ENCODE measurements at regions of chr11 and their contacts with region 1.

Region 1: DNA sequence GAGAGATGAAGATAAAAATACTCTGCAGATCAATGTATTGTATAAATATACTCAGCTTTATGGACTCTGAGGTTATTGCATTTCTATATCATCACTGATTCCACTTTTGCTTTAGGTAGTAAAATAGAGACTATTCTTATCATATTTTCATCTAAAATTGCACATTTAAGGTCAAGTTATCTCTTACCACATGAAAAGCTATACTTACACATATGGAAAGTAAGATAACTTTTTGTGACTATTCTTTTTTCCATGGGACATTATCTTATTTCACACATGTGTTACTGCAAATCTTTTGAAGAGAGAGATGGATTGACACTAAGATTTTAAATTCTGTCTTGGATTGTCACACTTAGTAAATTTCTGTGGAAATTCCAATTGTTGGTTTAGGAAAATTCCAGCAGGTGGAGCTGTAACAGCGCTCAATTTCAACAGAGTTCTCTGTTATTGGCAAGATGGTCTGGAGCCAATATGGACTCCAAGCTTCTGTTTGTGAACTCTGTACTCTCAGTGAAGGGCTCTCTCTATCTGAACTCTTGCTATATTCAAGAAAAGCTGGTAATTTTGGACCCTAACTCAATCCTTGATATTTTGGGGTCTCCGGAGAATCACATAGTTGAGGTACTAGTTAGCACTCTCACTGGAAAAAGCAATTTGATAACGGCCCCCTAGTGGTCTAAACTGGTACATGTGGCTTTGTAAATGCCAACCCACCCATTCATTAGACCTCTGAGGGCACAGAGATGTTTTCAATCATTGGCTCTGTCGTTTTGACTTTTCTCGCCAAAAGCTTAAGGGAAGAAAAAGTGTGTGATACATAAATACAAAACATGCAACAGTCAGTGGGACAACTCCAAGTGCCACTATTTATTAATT is 429.7 kb downstream of the ETS1 start:
- DNase-seq: peak in 1 of 2 experiments; percentile 76
- H3K4me3 ChIP-seq: peak overlapping the region in 2 of 4 experiments; percentile 19 to 45; a peak in 4 of 8 replicates
- H3K27ac ChIP-seq: no peak overlapping the region
- H3K4me1 ChIP-seq: no peaks in the 10 kb centered on the region
- H3K27me3 ChIP-seq: no peaks in the 10 kb centered on the region
- CTCF ChIP-seq: peak in 2 of 3 experiments; percentile 67 to 68; a peak in 3 of 4 replicates
- EP300 ChIP-seq: no peak
- POLR2A ChIP-seq: no peak
- RAD21 ChIP-seq: peak; percentile 70 to 71

Region 2: DNA sequence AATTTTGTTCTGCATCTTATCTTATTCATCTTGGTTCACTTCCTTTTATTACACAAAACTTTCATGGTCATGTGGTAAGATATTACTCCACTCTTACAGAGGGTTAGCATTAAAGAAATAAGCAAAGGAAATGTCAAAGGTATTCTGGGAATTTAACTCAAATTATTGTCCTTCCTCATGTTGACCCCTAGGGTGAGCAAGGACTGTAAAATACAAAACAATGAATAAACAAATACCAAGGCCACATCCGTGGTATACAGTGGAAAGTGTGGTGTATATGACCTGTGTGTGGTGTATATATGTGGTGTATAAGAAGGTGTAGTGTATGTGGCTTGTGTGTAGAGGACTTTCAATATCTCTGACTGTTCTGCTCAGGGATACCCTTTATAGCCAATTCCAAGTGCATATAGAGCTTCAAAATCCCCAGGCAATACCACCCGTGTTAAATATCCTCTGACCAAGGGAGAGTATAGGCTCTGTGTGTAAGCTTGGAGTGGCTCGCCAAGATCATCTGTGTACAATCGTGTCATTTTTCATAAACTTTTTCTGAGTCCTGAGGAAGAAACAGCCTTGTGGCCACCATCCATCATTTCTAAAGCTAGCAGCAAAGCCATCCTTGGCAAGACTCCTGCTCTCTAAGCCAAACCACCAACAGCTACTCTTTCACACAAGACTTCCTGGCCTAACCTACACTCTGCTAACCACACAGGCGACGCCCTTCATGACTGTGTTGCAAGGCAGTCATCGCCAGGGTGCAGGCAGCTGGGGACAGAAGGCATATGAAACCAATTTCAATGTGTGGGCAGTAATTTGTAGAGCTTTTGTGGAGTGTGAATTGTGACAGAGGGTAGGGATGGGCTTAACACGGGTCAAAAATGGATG is 118.3 kb before region 1 on chr11:
- CTCF ChIA-PET with region 1: interaction called, 14 read pairs
- POLR2A ChIA-PET with region 1: no interaction called
- DNase-seq: no peak
- H3K4me3 ChIP-seq: no peak overlapping the region
- H3K27ac ChIP-seq: no peak overlapping the region
- H3K4me1 ChIP-seq: no peaks in the 10 kb centered on the region; a peak in 1 of 7 replicates
- H3K27me3 ChIP-seq: no peaks in the 10 kb centered on the region
- CTCF ChIP-seq: no peak
- EP300 ChIP-seq: no peak
- POLR2A ChIP-seq: no peak
- RAD21 ChIP-seq: no peak

Region 3: GRCh38 chr11:128116885-128117284 is 40.8 kb before region 1 on chr11:
- CTCF ChIA-PET with region 1: interaction called, 11 read pairs
- POLR2A ChIA-PET with region 1: no interaction called
- DNase-seq: no peak
- H3K4me3 ChIP-seq: no peak overlapping the region
- H3K27ac ChIP-seq: no peak overlapping the region
- H3K4me1 ChIP-seq: no peaks in the 10 kb centered on the region
- H3K27me3 ChIP-seq: no peaks in the 10 kb centered on the region
- CTCF ChIP-seq: no peak
- EP300 ChIP-seq: no peak
- POLR2A ChIP-seq: no peak
- RAD21 ChIP-seq: no peak

Region 4: DNA sequence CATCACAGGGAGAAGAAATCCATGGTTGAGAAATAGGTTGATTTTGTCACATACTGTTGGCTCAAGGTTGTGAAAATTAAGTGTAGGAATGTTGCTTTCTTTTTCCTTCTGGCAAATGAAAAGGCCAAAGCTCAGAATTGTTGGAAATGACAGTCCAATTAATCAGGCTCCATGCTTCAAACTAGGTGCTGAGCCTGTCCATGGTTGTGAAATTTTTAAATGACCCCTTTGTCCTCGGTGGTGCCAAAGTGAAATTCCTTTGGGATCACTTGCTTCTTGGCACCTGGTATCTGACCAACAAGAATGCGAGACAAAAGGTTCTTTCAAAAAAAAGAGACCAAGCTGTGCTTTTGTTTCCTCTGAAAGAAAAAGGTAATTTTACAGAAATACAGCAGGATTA is 22.2 kb before region 1 on chr11:
- CTCF ChIA-PET with region 1: interaction called, 20 read pairs
- POLR2A ChIA-PET with region 1: no interaction called
- DNase-seq: no peak
- H3K4me3 ChIP-seq: peak overlapping the region in 1 of 4 experiments; percentile 17; a peak in 1 of 8 replicates
- H3K27ac ChIP-seq: 0 out of 2 replicates have a peak overlapping the region, but pooled peaks have one; percentile 28
- H3K4me1 ChIP-seq: 0 out of 7 replicates have a peak, but pooled peaks cover 0 to 3% (median 1%) of the 10 kb centered on the region in 4 experiments
- H3K27me3 ChIP-seq: no peaks in the 10 kb centered on the region
- CTCF ChIP-seq: no peak
- EP300 ChIP-seq: 0 out of 3 replicates have a peak, but pooled peaks of 1 of the 2 experiments have one; percentile 32
- POLR2A ChIP-seq: no peak
- RAD21 ChIP-seq: no peak

Region 5: GRCh38 chr11:128172046-128172878 is 14.6 kb after region 1 on chr11:
- CTCF ChIA-PET with region 1: interaction called, 112 read pairs
- POLR2A ChIA-PET with region 1: interaction called, 3 read pairs
- DNase-seq: peak in 1 of 2 experiments; percentile 85
- H3K4me3 ChIP-seq: no peak overlapping the region
- H3K27ac ChIP-seq: no peak overlapping the region
- H3K4me1 ChIP-seq: peaks cover 2 to 6% (median 3%) of the 10 kb centered on the region in 4 experiments; a peak in 6 of 7 replicates
- H3K27me3 ChIP-seq: no peaks in the 10 kb centered on the region; a peak in 1 of 7 replicates
- CTCF ChIP-seq: peak; percentile 53 to 82 (median 70)
- EP300 ChIP-seq: no peak
- POLR2A ChIP-seq: no peak
- RAD21 ChIP-seq: peak; percentile 90 to 93

Region 6: GRCh38 chr11:128208329-128209137 is 50.9 kb after region 1 on chr11:
- CTCF ChIA-PET with region 1: no interaction called
- POLR2A ChIA-PET with region 1: no interaction called
- DNase-seq: no peak
- H3K4me3 ChIP-seq: no peak overlapping the region
- H3K27ac ChIP-seq: no peak overlapping the region
- H3K4me1 ChIP-seq: no peaks in the 10 kb centered on the region
- H3K27me3 ChIP-seq: no peaks in the 10 kb centered on the region
- CTCF ChIP-seq: no peak
- EP300 ChIP-seq: no peak
- POLR2A ChIP-seq: no peak
- RAD21 ChIP-seq: no peak

Region 7: GRCh38 chr11:128290106-128290840 is 132.6 kb after region 1 on chr11:
- CTCF ChIA-PET with region 1: interaction called, 17 read pairs
- POLR2A ChIA-PET with region 1: no interaction called
- DNase-seq: peak in 1 of 2 experiments; percentile 60
- H3K4me3 ChIP-seq: no peak overlapping the region
- H3K27ac ChIP-seq: no peak overlapping the region
- H3K4me1 ChIP-seq: no peaks in the 10 kb centered on the region
- H3K27me3 ChIP-seq: no peaks in the 10 kb centered on the region
- CTCF ChIP-seq: peak in 2 of 3 experiments; percentile 72 to 78; a peak in 3 of 4 replicates
- EP300 ChIP-seq: no peak
- POLR2A ChIP-seq: no peak
- RAD21 ChIP-seq: peak; percentile 93 to 94

Region 8: DNA sequence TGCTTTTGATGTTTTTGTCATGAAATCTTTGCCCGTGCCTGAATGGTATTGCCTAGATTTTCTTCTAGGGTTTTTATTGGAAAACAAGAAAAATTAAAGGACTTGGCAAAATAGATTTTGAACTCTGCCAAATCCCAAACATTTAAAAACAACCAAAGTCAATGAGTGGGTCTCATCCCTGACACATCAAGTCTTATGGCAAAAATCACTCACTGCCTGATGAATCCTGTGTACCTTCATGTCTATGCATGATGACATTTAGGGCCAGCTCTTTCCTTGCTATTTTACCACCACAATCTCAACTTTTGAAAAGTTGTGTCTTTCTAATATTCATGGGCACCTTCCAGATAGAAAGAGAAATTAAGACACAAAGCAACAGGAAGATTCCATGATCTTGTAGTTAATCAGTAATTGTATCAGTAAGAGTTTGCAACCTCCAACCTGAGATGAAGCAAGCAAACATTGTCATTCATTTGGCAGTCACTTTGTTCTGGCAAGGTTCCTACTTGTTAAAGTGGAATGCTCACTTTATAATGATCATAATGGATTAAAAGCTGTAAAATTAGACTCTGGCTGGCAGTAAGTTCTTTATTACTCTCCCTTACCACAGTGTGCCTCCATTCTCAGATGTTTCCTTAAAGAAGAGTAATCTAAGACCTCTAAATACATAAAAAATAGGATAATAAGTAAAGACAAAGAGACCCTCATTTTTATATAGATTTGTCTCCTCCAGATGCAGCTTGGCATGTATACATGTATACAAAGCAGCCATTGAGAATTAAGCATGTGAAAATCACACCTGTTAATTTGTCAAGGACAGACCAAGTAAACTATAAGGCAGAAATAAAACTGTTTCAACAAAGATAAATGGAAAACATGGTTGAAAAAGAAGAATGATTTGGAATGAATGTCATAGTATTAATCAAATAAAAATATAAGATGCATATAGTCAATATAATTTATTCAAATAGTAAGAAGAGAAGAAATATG is 378.1 kb after region 1 on chr11:
- CTCF ChIA-PET with region 1: no interaction called
- POLR2A ChIA-PET with region 1: no interaction called
- DNase-seq: no peak
- H3K4me3 ChIP-seq: no peak overlapping the region
- H3K27ac ChIP-seq: no peak overlapping the region
- H3K4me1 ChIP-seq: peaks cover 6 to 19% (median 12%) of the 10 kb centered on the region in 4 experiments; a peak in 6 of 7 replicates
- H3K27me3 ChIP-seq: peaks cover 3 to 32% (median 23%) of the 10 kb centered on the region in 4 experiments; a peak in 6 of 7 replicates
- CTCF ChIP-seq: no peak
- EP300 ChIP-seq: no peak
- POLR2A ChIP-seq: no peak
- RAD21 ChIP-seq: no peak

Region 9: DNA sequence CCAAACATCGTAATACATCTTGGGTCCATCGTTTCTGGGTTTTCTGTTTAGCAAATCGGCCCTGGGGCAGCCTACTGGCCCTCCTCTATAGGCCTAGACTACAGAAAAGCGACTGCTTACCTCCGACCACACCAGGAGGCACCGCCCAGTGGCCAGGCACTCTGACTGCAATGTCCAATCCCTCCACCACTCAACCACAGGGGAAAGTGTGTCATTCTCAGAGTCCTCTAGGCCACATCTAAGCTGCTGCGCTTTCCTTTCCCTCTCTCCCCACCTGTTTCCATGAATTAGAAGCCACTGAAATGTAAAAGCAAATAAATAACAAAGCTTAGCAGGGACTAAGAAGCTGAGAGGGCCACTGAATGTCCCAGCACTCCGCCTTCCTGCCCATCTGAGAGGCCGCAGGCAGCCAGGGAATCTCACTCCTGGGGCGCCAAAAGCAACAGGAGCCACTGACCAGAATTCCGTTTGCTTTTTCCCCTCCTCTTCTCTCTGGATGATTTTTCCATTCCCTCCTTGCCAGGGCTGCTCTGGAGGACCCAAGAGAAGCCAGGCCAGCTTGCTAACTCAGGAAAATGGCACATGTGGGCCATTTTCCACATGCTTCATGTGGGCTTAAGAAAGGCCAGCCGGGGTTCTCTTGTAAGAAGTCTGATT is 486.1 kb after region 1 on chr11:
- CTCF ChIA-PET with region 1: interaction called, 13 read pairs
- POLR2A ChIA-PET with region 1: no interaction called
- DNase-seq: no peak
- H3K4me3 ChIP-seq: no peak overlapping the region
- H3K27ac ChIP-seq: no peak overlapping the region
- H3K4me1 ChIP-seq: no peaks in the 10 kb centered on the region
- H3K27me3 ChIP-seq: no peaks in the 10 kb centered on the region
- CTCF ChIP-seq: peak; percentile 43 to 65 (median 62)
- EP300 ChIP-seq: no peak
- POLR2A ChIP-seq: no peak
- RAD21 ChIP-seq: peak; percentile 49 to 51